A549 (cell line): ENCODE measurements at regions of chr22 and their contacts with region 1.

Region 1: GRCh38 chr22:20418211-20418788 is 19.3 kb downstream of the SCARF2 start:
- DNase-seq: peak; percentile 52 to 78
- ATAC-seq: peak; percentile 93 to 94
- H3K4me3 ChIP-seq: peak overlapping the region; percentile 46
- H3K27ac ChIP-seq: peak overlapping the region; percentile 63 to 79
- H3K4me1 ChIP-seq: no peaks in the 10 kb centered on the region
- CTCF ChIP-seq: peak; percentile 82
- EP300 ChIP-seq: no peak
- POLR2A ChIP-seq: no peak
- RAD21 ChIP-seq: peak; percentile 83

Region 2: DNA sequence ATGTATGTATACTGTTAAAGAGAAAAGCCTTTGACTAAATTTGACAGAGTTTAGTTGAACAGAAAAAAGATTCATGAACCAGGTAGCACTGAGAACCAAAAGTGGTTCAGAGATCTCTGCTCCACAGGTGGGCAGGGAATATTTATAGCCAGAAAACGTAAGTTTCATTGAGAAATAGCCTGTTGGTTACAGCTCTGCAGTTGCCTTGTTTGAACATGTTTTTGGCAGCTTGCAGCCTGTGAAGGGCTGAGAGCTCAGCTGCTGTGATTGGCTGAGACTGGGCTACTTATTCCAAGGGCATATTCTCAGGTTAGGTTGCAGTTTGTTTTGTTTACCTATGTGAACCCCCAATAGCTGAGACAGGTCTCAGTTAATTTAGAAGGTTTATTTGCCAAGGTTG is 37.8 kb before region 1 on chr22:
- CTCF ChIA-PET with region 1: no interaction called
- POLR2A ChIA-PET with region 1: no interaction called
- DNase-seq: no peak
- ATAC-seq: no peak
- H3K4me3 ChIP-seq: no peak overlapping the region
- H3K27ac ChIP-seq: no peak overlapping the region
- H3K4me1 ChIP-seq: no peaks in the 10 kb centered on the region
- CTCF ChIP-seq: no peak
- EP300 ChIP-seq: no peak
- POLR2A ChIP-seq: no peak
- RAD21 ChIP-seq: no peak

Region 3: GRCh38 chr22:20393909-20394691 is 24.2 kb before region 1 on chr22 and contains the start of gene ZNF74:
- CTCF ChIA-PET with region 1: interaction called, 13 read pairs
- POLR2A ChIA-PET with region 1: interaction called, 5 read pairs
- DNase-seq: peak; percentile 31 to 85
- ATAC-seq: peak; percentile 87 to 95
- H3K4me3 ChIP-seq: peak within 1 kb of the TSS; percentile 60
- H3K27ac ChIP-seq: peak within 1 kb of the TSS; percentile 82 to 86
- H3K4me1 ChIP-seq: peaks cover 8% of the 10 kb centered on the region; the same call in 2 of the 3 replicates
- CTCF ChIP-seq: no peak
- EP300 ChIP-seq: no peak
- POLR2A ChIP-seq: peak; percentile 80
- RAD21 ChIP-seq: no peak
- polyA plus RNA-seq, gene ZNF74: 4.3 and 5.1 TPM in 2 replicates

Region 4: DNA sequence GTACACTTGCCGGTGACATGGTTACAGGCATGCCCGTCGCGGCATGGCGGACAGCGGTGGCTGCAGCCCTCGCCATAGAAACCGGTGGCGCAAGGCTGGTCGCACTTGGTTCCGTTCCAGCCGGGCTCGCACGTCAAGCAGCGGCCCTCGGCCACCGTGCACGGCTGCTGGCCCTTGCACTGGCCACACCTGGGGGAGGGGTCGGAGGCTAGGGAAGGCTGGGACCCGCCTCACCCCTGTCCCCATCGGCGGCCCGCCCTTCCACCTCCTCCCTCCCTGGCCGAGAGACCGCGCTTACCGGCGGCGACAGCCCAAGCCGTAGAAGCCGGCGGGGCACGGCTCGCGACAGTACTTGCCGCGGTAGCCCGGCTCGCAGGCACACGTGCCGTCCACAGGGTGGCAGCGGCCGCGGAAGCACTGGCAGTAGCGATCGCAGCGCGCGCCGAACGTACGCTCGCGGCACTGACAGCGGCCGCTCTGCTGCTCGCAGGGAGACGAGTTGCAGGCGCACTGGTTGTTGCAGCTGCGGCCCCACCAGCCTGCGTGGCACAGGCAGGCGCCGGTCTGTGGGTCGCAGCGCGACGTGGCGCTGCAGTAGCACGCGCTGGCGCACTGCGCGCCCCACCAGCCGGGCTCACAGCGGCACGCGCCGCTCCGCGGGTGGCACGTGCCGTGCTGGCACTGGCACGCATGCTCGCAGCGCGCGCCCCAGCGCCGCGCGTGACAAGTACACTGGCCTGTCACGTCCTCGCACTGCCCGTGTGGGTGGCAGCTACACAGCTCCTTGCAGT is 12.6 kb after region 1 on chr22:
- CTCF ChIA-PET with region 1: interaction called, 14 read pairs
- POLR2A ChIA-PET with region 1: interaction called, 4 read pairs
- DNase-seq: peak; percentile 65 to 73
- ATAC-seq: peak; percentile 84 to 86
- H3K4me3 ChIP-seq: peak overlapping the region; percentile 41
- H3K27ac ChIP-seq: peak overlapping the region in 1 of 2 experiments; percentile 55; a peak in 2 of 6 replicates
- H3K4me1 ChIP-seq: peaks cover 5% of the 10 kb centered on the region; the same call in 1 of the 3 replicates
- CTCF ChIP-seq: peak; percentile 26; the same call in 2 of the 3 replicates
- EP300 ChIP-seq: no peak
- POLR2A ChIP-seq: no peak
- RAD21 ChIP-seq: no peak

Region 5: DNA sequence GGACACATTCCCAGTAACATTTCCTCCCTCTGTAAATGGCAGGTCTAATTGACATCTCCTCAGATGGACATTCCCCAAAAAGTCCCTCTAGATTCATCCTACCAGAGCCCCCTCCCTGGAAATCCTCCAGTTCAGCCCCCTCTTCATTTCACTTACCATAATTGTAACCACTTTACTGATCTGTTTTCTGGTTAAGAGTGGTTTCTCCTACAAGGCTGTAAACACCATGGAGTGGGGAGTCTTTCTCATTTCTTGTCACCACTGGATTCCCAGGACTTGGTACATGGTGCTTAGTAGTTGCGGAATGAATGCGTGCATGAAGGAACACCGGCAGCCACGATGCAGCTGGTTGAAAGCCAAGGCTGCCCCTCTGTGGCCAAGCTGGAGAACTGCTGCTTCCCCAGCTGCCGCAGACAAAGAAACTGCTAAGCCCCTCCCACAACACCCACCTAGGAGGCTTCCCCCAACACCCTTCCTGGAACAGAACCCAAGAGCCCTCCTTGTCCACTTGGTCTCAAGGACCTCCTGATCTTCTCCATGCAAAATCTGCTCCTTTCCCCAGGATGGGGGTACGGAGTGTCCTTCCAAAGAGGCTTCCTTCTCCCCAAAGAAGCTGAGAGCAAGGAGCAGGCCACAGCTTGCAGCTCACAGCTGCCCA is 37.9 kb after region 1 on chr22:
- CTCF ChIA-PET with region 1: interaction called, 55 read pairs
- POLR2A ChIA-PET with region 1: interaction called, 4 read pairs
- DNase-seq: peak; percentile 54 to 72
- ATAC-seq: peak; percentile 89 to 95
- H3K4me3 ChIP-seq: no peak overlapping the region
- H3K27ac ChIP-seq: no peak overlapping the region
- H3K4me1 ChIP-seq: 0 out of 3 replicates have a peak, but pooled peaks cover 2% of the 10 kb centered on the region
- CTCF ChIP-seq: peak; percentile 57
- EP300 ChIP-seq: no peak
- POLR2A ChIP-seq: no peak
- RAD21 ChIP-seq: peak; percentile 72 to 75